MCF 10A (cell line): ENCODE measurements at regions of chr2 and their contacts with region 1.

Region 1: GRCh38 chr2:130797493-130798435 is 39.0 kb upstream of the ARHGEF4 start:
- DNase-seq: peak; percentile 91
- H3K4me3 Mint-ChIP-seq: peak overlapping the region; percentile 67
- H3K27ac Mint-ChIP-seq: no peak overlapping the region
- H3K4me1 Mint-ChIP-seq: peaks cover 4% of the 10 kb centered on the region
- H3K27me3 Mint-ChIP-seq: no peaks in the 10 kb centered on the region
- CTCF ChIP-seq: peak; percentile 98

Region 2: DNA sequence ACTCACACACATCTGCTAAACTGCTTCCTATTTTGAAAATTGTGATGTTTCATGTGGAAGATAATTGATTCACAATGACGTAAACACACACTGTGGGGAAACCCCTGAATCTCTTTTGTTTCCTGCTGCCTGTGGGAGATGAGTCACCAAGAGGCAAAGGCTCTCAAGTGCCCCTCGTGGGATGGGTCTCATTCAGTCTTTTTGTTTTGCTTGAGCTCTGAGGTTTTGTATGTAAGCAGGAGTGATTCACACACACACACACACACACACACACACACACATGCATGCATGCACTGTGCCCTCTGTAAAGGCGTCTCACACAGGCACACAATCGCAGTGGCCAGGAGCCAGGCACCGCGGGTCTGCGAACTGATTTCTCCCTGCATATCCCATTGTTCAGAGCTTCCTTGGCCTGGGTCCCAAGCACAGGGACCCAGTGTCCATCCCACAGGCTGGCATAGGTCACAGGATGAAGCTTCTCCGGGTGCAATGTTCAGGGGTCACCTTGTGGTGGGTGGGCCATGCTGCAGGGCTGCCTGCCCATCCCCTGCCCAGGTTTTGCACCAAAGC is 26.8 kb after region 1 on chr2:
- CTCF ChIA-PET with region 1: interaction called, 12 read pairs
- POLR2A ChIA-PET with region 1: interaction called, 5 read pairs
- intact Hi-C with region 1: no loop called
- DNase-seq: peak; percentile 98
- H3K4me3 Mint-ChIP-seq: peak overlapping the region; percentile 31
- H3K27ac Mint-ChIP-seq: peak overlapping the region; percentile 96
- H3K4me1 Mint-ChIP-seq: peaks cover 60% of the 10 kb centered on the region
- H3K27me3 Mint-ChIP-seq: no peaks in the 10 kb centered on the region
- CTCF ChIP-seq: no peak

Region 3: GRCh38 chr2:130884503-130884902 is 86.7 kb after region 1 on chr2:
- CTCF ChIA-PET with region 1: interaction called, 259 read pairs
- POLR2A ChIA-PET with region 1: interaction called, 3 read pairs
- intact Hi-C with region 1: no loop called
- DNase-seq: no peak
- H3K4me3 Mint-ChIP-seq: no peak overlapping the region
- H3K27ac Mint-ChIP-seq: peak overlapping the region; percentile 49
- H3K4me1 Mint-ChIP-seq: peaks cover 40% of the 10 kb centered on the region
- H3K27me3 Mint-ChIP-seq: no peaks in the 10 kb centered on the region
- CTCF ChIP-seq: no peak

Region 4: GRCh38 chr2:130896813-130897212 is 99.0 kb after region 1 on chr2:
- CTCF ChIA-PET with region 1: interaction called, 12 read pairs
- POLR2A ChIA-PET with region 1: no interaction called
- intact Hi-C with region 1: no loop called
- DNase-seq: no peak
- H3K4me3 Mint-ChIP-seq: no peak overlapping the region
- H3K27ac Mint-ChIP-seq: no peak overlapping the region
- H3K4me1 Mint-ChIP-seq: peaks cover 46% of the 10 kb centered on the region
- H3K27me3 Mint-ChIP-seq: no peaks in the 10 kb centered on the region
- CTCF ChIP-seq: no peak

Region 5: GRCh38 chr2:131016826-131017741 is 219.3 kb after region 1 on chr2:
- CTCF ChIA-PET with region 1: interaction called, 17 read pairs
- POLR2A ChIA-PET with region 1: interaction called, 9 read pairs
- intact Hi-C with region 1: loop called (anchors 1 kb)
- DNase-seq: peak; percentile 99
- H3K4me3 Mint-ChIP-seq: peak overlapping the region; percentile 71
- H3K27ac Mint-ChIP-seq: peak overlapping the region; percentile 97
- H3K4me1 Mint-ChIP-seq: peaks cover 35% of the 10 kb centered on the region
- H3K27me3 Mint-ChIP-seq: no peaks in the 10 kb centered on the region
- CTCF ChIP-seq: no peak

Region 6: DNA sequence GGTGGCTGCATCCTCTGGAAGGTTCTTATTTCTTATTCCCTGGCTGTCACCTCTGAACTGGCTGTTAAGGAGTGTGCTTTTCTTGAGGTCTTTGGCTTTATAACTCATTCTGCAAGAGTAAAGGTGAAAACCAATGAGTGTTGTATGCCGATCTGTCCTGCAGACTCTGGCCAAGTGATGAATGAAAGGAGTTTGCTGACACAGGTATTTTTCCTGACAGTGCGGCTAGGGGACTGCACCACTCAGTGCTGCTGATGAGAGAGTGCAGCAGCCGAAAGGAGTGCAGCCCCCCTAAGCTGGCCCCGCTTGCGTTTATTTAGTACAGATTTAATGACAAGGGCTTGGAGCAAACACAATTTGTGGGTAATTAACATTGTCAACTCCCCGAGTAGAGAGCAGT is 524.4 kb after region 1 on chr2:
- CTCF ChIA-PET with region 1: no interaction called
- POLR2A ChIA-PET with region 1: no interaction called
- intact Hi-C with region 1: no loop called
- DNase-seq: no peak
- H3K4me3 Mint-ChIP-seq: no peak overlapping the region
- H3K27ac Mint-ChIP-seq: no peak overlapping the region
- H3K4me1 Mint-ChIP-seq: no peaks in the 10 kb centered on the region
- H3K27me3 Mint-ChIP-seq: peaks cover 64% of the 10 kb centered on the region
- CTCF ChIP-seq: no peak